A549 (cell line): ENCODE measurements at regions of chr2 and their contacts with region 1.

Region 1: DNA sequence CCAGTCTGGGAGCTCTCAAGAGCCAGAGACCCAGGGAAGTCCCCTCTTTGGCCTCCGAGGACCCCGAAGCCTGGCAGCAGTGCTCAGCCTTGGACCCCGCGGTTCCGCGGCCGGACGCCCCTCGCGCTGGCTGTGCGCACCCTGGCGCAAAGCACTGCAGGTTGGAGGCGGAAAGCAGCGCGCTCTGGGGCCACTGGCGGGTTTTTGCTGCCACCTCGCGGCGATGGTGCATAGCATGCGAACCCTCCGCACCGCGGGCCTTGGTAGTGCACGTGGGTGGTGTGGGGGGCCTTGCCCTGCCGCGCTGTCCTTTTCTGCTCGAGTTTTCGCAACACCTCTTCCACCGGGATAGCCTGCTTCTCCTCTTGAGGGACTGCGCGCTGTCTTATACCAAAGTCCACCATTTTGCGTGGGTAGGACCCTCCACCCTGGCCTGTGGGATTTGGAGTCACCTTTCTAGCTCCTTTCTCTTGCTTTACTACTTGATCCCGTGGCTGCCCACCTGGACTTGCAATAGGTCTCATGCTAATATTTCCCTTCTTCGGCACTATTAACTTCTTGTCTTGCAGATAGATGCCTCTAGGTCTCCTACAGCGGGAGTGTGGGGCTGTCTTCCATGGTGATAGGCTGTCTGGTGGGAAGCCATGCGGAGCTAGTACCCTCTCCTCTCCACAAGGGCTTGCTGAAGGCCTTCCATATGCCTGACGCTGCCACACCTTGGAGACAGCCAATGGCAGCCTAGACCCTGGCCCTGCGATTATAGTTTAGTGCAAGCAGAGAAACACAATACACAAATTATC is 14.3 kb downstream of the SIX3 start:
- DNase-seq: peak; percentile 79
- ATAC-seq: peak; percentile 75 to 87
- H3K4me3 ChIP-seq: peak overlapping the region; percentile 36
- H3K27ac ChIP-seq: peak overlapping the region; percentile 64 to 71; a peak in 4 of 6 replicates
- H3K4me1 ChIP-seq: peaks cover 25% of the 10 kb centered on the region
- CTCF ChIP-seq: peak; percentile 98
- EP300 ChIP-seq: no peak
- POLR2A ChIP-seq: no peak
- RAD21 ChIP-seq: peak; percentile 98 to 99

Region 2: GRCh38 chr2:44392338-44392943 is 563.4 kb before region 1 on chr2:
- CTCF ChIA-PET with region 1: interaction called, 184 read pairs
- POLR2A ChIA-PET with region 1: no interaction called
- DNase-seq: peak; percentile 21 to 35
- ATAC-seq: no peak
- H3K4me3 ChIP-seq: no peak overlapping the region
- H3K27ac ChIP-seq: no peak overlapping the region
- H3K4me1 ChIP-seq: no peaks in the 10 kb centered on the region
- CTCF ChIP-seq: peak; percentile 95
- EP300 ChIP-seq: no peak
- POLR2A ChIP-seq: no peak
- RAD21 ChIP-seq: peak; percentile 75 to 82

Region 3: GRCh38 chr2:44560352-44560751 is 395.4 kb before region 1 on chr2:
- CTCF ChIA-PET with region 1: interaction called, 14 read pairs
- POLR2A ChIA-PET with region 1: no interaction called
- DNase-seq: peak in 1 of 2 experiments; percentile 35
- ATAC-seq: peak in 1 of 2 experiments; percentile 51; a peak in 2 of 6 replicates
- H3K4me3 ChIP-seq: no peak overlapping the region
- H3K27ac ChIP-seq: no peak overlapping the region
- H3K4me1 ChIP-seq: 0 out of 3 replicates have a peak, but pooled peaks cover 4% of the 10 kb centered on the region
- CTCF ChIP-seq: peak; percentile 35
- EP300 ChIP-seq: no peak
- POLR2A ChIP-seq: no peak
- RAD21 ChIP-seq: peak; percentile 33 to 38; a peak in 4 of 5 replicates

Region 4: GRCh38 chr2:44877417-44877816 is 78.4 kb before region 1 on chr2:
- CTCF ChIA-PET with region 1: interaction called, 13 read pairs
- POLR2A ChIA-PET with region 1: no interaction called
- DNase-seq: no peak
- ATAC-seq: peak in 1 of 2 experiments; percentile 23; a peak in 1 of 6 replicates
- H3K4me3 ChIP-seq: no peak overlapping the region
- H3K27ac ChIP-seq: no peak overlapping the region
- H3K4me1 ChIP-seq: no peaks in the 10 kb centered on the region
- CTCF ChIP-seq: no peak
- EP300 ChIP-seq: no peak
- POLR2A ChIP-seq: no peak
- RAD21 ChIP-seq: no peak

Region 5: DNA sequence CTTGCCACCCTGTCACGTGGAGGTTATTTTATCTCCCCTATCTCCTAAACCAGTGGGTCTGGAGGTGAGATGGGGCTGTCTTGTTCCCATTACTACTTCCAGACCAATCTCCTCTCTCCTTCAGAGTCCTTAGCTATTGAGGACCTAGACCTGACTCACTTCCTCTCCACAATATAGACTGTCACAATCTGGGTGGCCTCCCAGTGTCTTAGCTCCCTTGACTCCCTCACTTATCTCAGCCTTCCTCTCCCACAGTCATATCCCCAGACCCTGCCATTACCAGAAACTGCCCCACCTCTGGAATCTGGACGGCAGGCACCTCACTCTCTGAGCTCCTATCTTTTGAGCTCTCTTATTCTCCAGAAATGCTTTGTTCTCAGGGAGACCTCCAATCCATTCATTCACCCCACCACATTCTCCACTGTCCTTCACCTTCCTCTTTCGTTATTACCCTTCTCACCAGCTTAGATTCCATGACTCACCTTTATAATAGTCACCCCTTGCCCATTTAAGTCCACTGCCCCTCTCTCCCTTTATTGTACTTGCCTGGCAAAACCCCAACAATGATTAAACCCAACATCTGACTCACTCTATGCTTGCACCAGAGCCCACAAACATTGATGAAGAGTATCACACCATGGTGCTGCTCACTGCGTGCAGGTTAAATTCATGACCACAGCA is 37.6 kb before region 1 on chr2:
- CTCF ChIA-PET with region 1: interaction called, 19 read pairs
- POLR2A ChIA-PET with region 1: no interaction called
- DNase-seq: peak in 1 of 2 experiments; percentile 38
- ATAC-seq: peak; percentile 45 to 63
- H3K4me3 ChIP-seq: no peak overlapping the region
- H3K27ac ChIP-seq: no peak overlapping the region
- H3K4me1 ChIP-seq: peaks cover 12% of the 10 kb centered on the region; the same call in 2 of the 3 replicates
- CTCF ChIP-seq: no peak
- EP300 ChIP-seq: no peak
- POLR2A ChIP-seq: no peak
- RAD21 ChIP-seq: no peak

Region 6: GRCh38 chr2:45494269-45494977 is 538.6 kb after region 1 on chr2:
- CTCF ChIA-PET with region 1: interaction called, 16 read pairs
- POLR2A ChIA-PET with region 1: no interaction called
- DNase-seq: peak; percentile 34 to 79
- ATAC-seq: peak; percentile 59 to 63; a peak in 5 of 6 replicates
- H3K4me3 ChIP-seq: no peak overlapping the region
- H3K27ac ChIP-seq: no peak overlapping the region; a peak in 1 of 6 replicates
- H3K4me1 ChIP-seq: peaks cover 2% of the 10 kb centered on the region; the same call in 1 of the 3 replicates
- CTCF ChIP-seq: peak; percentile 97
- EP300 ChIP-seq: no peak; a peak in 1 of 5 replicates
- POLR2A ChIP-seq: no peak
- RAD21 ChIP-seq: peak; percentile 96 to 97